ENCODE measurements at regions of chr2 and their contacts with region 1.

Region 1: DNA sequence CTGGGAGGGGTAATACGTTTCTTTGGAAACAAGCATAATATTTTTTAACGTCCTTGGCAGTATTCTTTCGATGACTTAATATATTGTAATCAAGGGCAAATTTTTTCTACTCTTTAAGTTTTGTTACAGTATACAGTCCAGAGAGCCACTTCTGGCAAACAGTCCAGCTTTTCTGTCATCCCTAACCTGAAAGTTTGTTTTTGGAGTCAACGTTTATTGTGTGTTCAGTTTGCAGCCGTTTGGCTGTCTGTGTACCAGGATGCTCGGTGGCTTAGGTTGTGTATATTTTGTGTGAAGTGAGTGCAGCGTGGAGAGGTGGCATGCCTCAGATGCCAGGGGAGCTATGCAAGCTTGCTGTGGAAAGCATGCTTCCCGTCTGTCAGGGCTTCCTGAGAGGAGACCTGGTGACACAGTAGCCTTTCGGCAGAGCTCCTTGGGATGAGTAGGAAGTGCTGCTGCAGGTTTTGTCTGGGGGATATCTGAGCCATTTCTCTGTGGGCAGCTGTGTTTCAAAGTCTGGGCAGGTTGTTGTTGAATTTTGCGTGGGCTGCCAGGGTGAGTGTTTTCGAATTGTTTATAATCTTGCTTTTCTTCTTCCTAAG is 14.7 kb downstream of the MAP3K20 start:
- DNase-seq: no peak
- H3K4me3 ChIP-seq: no peak overlapping the region
- H3K27ac ChIP-seq: no peak overlapping the region
- H3K4me1 ChIP-seq: peaks cover 0 to 4% (median 0%) of the 10 kb centered on the region in 4 experiments; a peak in 1 of 7 replicates
- H3K27me3 ChIP-seq: no peaks in the 10 kb centered on the region
- CTCF ChIP-seq: no peak
- EP300 ChIP-seq: no peak
- POLR2A ChIP-seq: no peak
- RAD21 ChIP-seq: no peak

Region 2: DNA sequence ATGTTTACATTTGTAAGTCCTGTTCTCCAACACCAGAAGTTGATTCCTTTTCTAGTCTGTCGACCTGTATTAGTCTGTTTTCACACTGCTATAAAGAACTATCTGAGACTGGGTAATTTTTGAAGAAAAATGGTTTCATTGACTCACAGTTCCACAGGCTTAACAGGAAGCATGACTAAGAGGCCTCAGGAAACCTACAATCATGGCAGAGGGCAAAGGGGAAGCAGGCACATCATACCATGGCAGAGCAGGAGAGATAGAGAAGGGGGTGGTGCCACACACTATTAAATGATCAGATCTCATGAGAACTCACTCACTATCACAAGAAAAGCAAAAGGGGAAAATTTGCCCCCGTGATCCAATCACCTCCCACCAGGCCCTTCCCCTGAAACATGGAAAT is 127.6 kb before region 1 on chr2:
- CTCF ChIA-PET with region 1: no interaction called
- POLR2A ChIA-PET with region 1: no interaction called
- DNase-seq: no peak
- H3K4me3 ChIP-seq: no peak overlapping the region
- H3K27ac ChIP-seq: no peak overlapping the region
- H3K4me1 ChIP-seq: peaks cover 0 to 3% (median 0%) of the 10 kb centered on the region in 4 experiments; a peak in 2 of 7 replicates
- H3K27me3 ChIP-seq: no peaks in the 10 kb centered on the region
- CTCF ChIP-seq: no peak
- EP300 ChIP-seq: no peak
- POLR2A ChIP-seq: no peak
- RAD21 ChIP-seq: no peak

Region 3: GRCh38 chr2:173075781-173076580 is 14.4 kb before region 1 on chr2 and contains the start of gene MAP3K20:
- CTCF ChIA-PET with region 1: interaction called, 40 read pairs
- POLR2A ChIA-PET with region 1: interaction called, 3 read pairs
- DNase-seq: peak in 1 of 2 experiments; percentile 77
- H3K4me3 ChIP-seq: peak within 1 kb of the TSS; percentile 42 to 85 (median 78)
- H3K27ac ChIP-seq: no peak within 1 kb of the TSS
- H3K4me1 ChIP-seq: peaks cover 0 to 3% (median 1%) of the 10 kb centered on the region in 4 experiments; a peak in 3 of 7 replicates
- H3K27me3 ChIP-seq: no peaks in the 10 kb centered on the region
- CTCF ChIP-seq: peak in 2 of 3 experiments; percentile 14 to 51; a peak in 2 of 4 replicates
- EP300 ChIP-seq: no peak
- POLR2A ChIP-seq: peak in 1 of 2 experiments; percentile 68; a peak in 2 of 3 replicates
- RAD21 ChIP-seq: peak in 1 of 2 experiments; percentile 20; a peak in 1 of 4 replicates
- total RNA-seq, gene MAP3K20: 8.5 and 11.1 TPM in 2 replicates

Region 4: GRCh38 chr2:173218326-173219056 is 128.1 kb after region 1 on chr2:
- CTCF ChIA-PET with region 1: interaction called, 11 read pairs
- POLR2A ChIA-PET with region 1: no interaction called
- DNase-seq: no peak
- H3K4me3 ChIP-seq: no peak overlapping the region
- H3K27ac ChIP-seq: no peak overlapping the region
- H3K4me1 ChIP-seq: peaks cover 0 to 7% (median 2%) of the 10 kb centered on the region in 4 experiments; a peak in 5 of 7 replicates
- H3K27me3 ChIP-seq: no peaks in the 10 kb centered on the region
- CTCF ChIP-seq: no peak
- EP300 ChIP-seq: no peak
- POLR2A ChIP-seq: no peak
- RAD21 ChIP-seq: no peak

Region 5: DNA sequence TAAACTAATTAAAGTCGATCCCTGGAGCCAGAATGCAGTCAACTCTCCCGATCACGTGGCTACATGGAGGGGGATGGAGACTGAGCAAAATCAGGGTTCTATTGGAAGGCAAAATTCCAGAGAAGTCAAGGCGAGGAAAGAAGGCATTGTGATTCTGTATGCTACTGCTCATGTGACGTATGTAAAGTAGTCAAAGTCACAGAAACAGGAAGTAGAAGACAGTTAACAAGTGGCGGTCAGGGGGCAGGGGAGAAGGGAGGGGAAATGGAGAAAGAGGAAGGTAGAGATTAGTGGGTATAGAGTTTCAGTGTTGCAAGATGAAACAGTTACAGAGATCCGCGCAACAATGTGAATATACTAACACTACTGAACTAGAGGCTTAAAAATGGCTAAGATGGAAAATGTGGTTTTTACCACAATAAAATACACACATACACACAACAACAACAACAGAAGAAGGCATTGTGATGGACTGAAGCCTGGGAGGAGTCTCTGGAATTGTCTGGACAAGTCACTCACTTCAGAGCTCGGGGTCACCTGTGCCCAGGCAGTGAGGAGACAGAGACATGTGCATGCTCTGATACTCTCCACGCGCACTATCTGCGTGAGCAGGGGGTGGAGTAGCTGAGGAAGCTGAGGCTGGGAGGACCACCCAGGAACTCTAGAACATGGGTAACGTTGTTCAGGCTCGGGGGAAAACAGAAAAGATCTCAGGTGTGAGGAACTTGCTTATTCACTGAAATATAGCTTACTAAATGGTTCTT is 174.4 kb after region 1 on chr2:
- CTCF ChIA-PET with region 1: no interaction called
- POLR2A ChIA-PET with region 1: no interaction called
- DNase-seq: no peak
- H3K4me3 ChIP-seq: no peak overlapping the region
- H3K27ac ChIP-seq: no peak overlapping the region
- H3K4me1 ChIP-seq: peaks cover 2 to 9% (median 6%) of the 10 kb centered on the region in 4 experiments
- H3K27me3 ChIP-seq: no peaks in the 10 kb centered on the region
- CTCF ChIP-seq: no peak
- EP300 ChIP-seq: no peak
- POLR2A ChIP-seq: no peak
- RAD21 ChIP-seq: no peak

Region 6: DNA sequence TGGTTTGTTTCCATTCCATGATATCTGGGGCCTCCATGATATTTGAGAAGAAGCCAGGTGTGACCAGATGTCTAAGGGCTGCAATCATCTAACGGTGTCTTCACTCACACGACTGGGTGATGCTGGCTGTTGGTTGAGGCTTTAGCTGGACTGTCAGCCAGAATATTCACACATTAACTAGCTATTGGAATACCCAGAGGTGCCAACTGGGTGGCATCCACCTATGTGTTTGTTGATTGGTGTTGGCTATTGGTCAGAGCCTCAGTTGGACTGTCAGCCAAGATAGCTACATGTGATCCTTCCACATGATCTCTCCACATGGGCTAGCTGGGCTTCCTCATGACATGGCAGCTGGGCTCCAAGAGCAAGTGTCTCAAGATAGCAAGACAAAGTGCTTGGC is 381.7 kb after region 1 on chr2:
- CTCF ChIA-PET with region 1: no interaction called
- POLR2A ChIA-PET with region 1: no interaction called
- DNase-seq: no peak
- H3K4me3 ChIP-seq: no peak overlapping the region
- H3K27ac ChIP-seq: no peak overlapping the region
- H3K4me1 ChIP-seq: no peaks in the 10 kb centered on the region
- H3K27me3 ChIP-seq: no peaks in the 10 kb centered on the region
- CTCF ChIP-seq: no peak
- EP300 ChIP-seq: no peak
- POLR2A ChIP-seq: no peak
- RAD21 ChIP-seq: 0 out of 4 replicates have a peak, but pooled peaks of 1 of the 2 experiments have one; percentile 2

Measured in H1 (cell line).